H1 (cell line): ENCODE measurements at regions of chr12 and their contacts with region 1.

Region 1: DNA sequence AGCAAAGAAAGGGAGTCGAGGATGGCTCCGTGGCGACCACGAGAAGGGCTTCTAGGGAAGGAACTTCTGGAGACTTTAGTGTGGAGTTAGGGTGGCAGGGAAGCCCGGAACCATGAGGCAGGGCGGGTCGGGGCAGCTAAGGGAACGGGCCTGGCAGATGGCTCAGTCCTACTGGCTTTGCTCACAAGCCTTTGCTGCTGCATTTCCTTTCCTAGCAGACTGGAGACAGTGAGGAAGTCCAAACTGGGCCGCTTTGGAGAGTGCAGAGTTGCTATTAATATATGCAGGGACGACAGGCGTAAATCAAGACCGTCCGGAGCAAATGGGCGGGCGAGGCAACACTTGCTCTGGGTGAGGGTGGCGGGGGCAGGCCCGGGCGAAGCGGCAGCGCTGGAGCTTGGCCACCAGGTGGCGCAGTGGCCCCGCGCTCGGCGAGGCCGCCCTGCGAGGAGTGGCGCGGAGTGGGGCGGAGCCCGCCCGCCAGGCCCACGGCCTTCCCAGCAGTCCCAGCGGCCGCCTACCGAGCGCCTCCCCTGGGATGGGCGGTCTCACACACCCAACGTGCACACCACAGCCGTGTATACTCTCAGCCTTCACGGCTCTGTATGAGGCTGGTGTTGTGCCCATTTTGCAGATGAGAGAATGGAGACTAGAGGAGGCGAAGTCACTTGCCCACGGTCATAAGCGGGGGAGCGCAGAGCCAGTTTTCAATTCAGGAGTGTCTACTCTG is 24.4 kb upstream of the LRTM2 start:
- DNase-seq: peak; percentile 50 to 94
- H3K4me3 ChIP-seq: peak overlapping the region; percentile 31 to 70 (median 44); a peak in 7 of 8 replicates
- H3K27ac ChIP-seq: no peak overlapping the region
- H3K4me1 ChIP-seq: peaks cover 3 to 12% (median 4%) of the 10 kb centered on the region in 4 experiments; a peak in 6 of 7 replicates
- H3K27me3 ChIP-seq: peaks cover 1 to 11% (median 7%) of the 10 kb centered on the region in 4 experiments; a peak in 6 of 7 replicates
- CTCF ChIP-seq: peak in 2 of 3 experiments; percentile 89 to 92; a peak in 3 of 4 replicates
- EP300 ChIP-seq: no peak
- POLR2A ChIP-seq: no peak
- RAD21 ChIP-seq: peak; percentile 85 to 94

Region 2: DNA sequence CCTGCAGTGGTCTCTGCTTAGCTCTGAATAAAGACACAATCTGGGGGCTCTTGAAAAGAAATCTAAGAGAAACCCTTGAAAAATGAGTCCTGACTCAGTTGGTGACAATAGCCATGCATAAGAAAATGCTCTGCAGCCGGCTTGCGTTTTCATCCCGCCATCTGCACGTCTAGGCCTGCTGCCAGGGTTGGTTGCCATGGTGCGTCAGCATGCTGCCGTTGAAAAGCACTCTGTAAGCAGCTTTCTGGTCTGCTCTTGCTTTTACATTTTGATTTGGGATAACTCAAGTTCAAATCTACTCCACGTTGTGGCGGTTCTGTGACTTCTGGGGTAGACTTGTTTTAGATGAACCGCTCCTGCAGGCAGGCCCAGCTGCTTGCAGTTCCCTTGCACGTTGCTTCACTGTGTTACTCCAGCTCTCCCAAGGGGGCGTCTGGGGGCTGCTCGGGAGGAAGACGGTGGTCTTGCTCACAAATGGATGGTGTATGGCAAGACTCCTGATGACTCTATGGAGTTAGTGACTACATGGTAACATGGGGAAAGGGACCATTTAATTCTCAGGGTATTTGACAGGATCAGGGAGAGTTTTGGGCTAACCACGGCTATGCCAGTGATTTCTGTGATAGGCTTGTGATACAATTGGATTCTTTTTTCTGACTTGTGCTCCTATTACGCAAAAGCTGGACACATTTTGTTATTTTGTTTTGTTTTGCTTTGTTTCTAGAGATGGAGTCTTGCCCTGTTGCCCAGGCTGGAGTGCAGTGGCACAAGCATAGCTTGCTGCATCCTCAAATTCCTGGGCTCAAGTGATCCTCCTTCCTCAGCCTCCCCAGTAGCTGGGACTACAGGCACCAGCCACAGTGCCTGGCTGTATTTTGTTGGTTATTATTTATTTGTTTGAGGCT is 151.2 kb before region 1 on chr12:
- CTCF ChIA-PET with region 1: interaction called, 265 read pairs
- POLR2A ChIA-PET with region 1: interaction called, 6 read pairs
- DNase-seq: no peak
- H3K4me3 ChIP-seq: no peak overlapping the region
- H3K27ac ChIP-seq: no peak overlapping the region
- H3K4me1 ChIP-seq: peaks cover 0 to 5% (median 0%) of the 10 kb centered on the region in 4 experiments; a peak in 2 of 7 replicates
- H3K27me3 ChIP-seq: peaks cover 0 to 2% (median 1%) of the 10 kb centered on the region in 4 experiments; a peak in 2 of 7 replicates
- CTCF ChIP-seq: peak in 2 of 3 experiments; percentile 9 to 10; a peak in 1 of 4 replicates
- EP300 ChIP-seq: no peak
- POLR2A ChIP-seq: no peak
- RAD21 ChIP-seq: peak in 1 of 2 experiments; percentile 13; a peak in 1 of 4 replicates

Region 3: DNA sequence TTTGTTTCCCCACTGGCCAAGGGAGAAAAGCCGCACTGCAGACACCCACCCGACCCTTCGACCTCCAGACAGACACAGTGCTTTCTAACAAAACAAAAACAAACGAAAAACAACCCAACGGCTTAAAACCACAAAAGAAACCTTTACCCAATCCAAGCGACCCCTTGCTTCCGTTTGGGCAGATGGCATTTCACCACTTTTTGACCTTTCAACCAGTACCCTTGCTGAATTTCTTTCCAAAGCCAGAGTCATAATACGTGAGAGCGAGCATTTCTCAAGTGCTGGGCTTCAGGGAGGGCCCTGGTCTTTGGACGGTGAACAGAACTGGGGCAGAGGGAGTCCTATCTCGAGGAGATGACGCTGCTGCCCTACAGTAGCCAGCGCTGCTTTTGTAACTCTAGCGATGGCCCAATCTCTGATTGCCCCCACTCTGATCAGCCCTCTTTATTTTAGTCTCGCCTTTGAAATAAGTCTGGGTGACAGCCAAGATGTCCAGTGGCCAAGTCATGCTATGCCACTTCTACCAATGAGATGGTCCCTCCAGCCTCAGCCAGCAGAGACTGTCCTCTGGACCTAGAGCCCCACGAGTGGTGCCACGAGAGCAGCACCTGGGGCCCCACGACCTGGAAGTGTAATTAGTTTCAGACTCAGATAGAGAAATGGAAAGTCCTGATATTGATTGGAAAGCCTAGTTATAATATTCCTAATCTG is 127.0 kb before region 1 on chr12:
- CTCF ChIA-PET with region 1: interaction called, 15 read pairs
- POLR2A ChIA-PET with region 1: no interaction called
- DNase-seq: no peak
- H3K4me3 ChIP-seq: no peak overlapping the region
- H3K27ac ChIP-seq: no peak overlapping the region
- H3K4me1 ChIP-seq: no peaks in the 10 kb centered on the region
- H3K27me3 ChIP-seq: peaks cover 0 to 2% (median under 1%) of the 10 kb centered on the region in 4 experiments; a peak in 6 of 7 replicates
- CTCF ChIP-seq: no peak
- EP300 ChIP-seq: no peak
- POLR2A ChIP-seq: no peak
- RAD21 ChIP-seq: no peak

Region 4: DNA sequence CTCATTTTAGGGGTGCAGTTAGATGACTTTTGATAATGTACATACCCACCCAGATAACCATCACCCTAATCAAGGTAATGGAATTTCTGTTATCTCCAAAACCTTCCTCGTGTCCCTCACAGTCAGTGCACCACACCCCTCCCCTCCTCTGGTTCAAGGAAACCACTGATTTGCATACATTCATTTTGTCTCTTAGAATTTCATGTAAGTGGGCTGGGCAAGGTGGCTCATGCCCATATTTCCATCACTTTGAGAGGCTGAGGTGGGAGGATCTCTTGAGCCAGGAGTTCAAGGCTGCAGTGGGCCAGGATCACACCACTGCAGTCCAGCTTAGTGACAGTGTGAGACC is 89.3 kb before region 1 on chr12:
- CTCF ChIA-PET with region 1: interaction called, 14 read pairs
- POLR2A ChIA-PET with region 1: no interaction called
- DNase-seq: no peak
- H3K4me3 ChIP-seq: no peak overlapping the region
- H3K27ac ChIP-seq: no peak overlapping the region
- H3K4me1 ChIP-seq: no peaks in the 10 kb centered on the region
- H3K27me3 ChIP-seq: no peaks in the 10 kb centered on the region
- CTCF ChIP-seq: no peak
- EP300 ChIP-seq: no peak
- POLR2A ChIP-seq: no peak
- RAD21 ChIP-seq: no peak

Region 5: GRCh38 chr12:1779783-1780182 is 16.2 kb before region 1 on chr12:
- CTCF ChIA-PET with region 1: interaction called, 14 read pairs
- POLR2A ChIA-PET with region 1: no interaction called
- DNase-seq: no peak
- H3K4me3 ChIP-seq: no peak overlapping the region
- H3K27ac ChIP-seq: no peak overlapping the region
- H3K4me1 ChIP-seq: peaks cover 0 to 5% (median 3%) of the 10 kb centered on the region in 4 experiments; a peak in 2 of 7 replicates
- H3K27me3 ChIP-seq: no peaks in the 10 kb centered on the region
- CTCF ChIP-seq: no peak
- EP300 ChIP-seq: no peak
- POLR2A ChIP-seq: no peak
- RAD21 ChIP-seq: no peak